ENCODE measurements at regions of chr6 and their contacts with region 1.

Region 1: GRCh38 chr6:72084992-72085569 is 198.7 kb downstream of the RIMS1 start:
- DNase-seq: no peak
- ATAC-seq: no peak
- H3K4me3 ChIP-seq: no peak overlapping the region
- H3K27ac ChIP-seq: no peak overlapping the region
- H3K4me1 ChIP-seq: no peaks in the 10 kb centered on the region
- H3K27me3 ChIP-seq: no peaks in the 10 kb centered on the region
- CTCF ChIP-seq: peak; percentile 48

Region 2: GRCh38 chr6:71533939-71534379 is 551.1 kb before region 1 on chr6:
- intact Hi-C with region 1: loop called (anchors 5 to 10 kb)
- DNase-seq: no peak
- ATAC-seq: no peak
- H3K4me3 ChIP-seq: no peak overlapping the region
- H3K27ac ChIP-seq: no peak overlapping the region
- H3K4me1 ChIP-seq: no peaks in the 10 kb centered on the region
- H3K27me3 ChIP-seq: no peaks in the 10 kb centered on the region
- CTCF ChIP-seq: peak; percentile 67

Region 3: DNA sequence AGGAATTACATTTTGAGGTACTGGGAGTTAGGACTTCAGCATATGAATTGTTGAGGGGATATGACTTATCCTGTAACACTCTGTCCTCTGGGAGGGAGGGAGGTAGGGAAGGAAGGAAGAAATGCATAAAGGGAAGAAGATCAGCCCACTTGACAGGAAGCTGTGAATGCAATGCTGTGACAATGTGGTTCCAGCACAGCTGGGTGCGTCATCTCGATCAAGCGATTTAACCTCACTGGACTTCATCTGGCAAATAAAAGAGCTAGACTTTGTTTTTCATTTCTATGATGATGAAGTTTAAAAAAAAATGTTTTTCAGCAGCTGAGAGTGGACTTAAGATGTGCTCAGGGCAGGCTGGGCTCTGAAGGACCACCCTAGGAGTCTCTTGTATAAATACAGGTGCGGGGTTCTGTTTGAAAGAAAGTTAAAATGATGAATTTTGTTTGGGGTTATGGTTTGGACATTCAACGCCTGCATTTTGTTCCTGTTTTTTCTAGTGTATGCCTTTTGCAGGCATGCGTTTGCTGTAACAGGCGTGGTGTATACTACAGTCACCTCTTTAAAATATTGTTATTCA is 20.6 kb before region 1 on chr6:
- intact Hi-C with region 1: no loop called
- DNase-seq: no peak
- ATAC-seq: no peak
- H3K4me3 ChIP-seq: no peak overlapping the region
- H3K27ac ChIP-seq: no peak overlapping the region
- H3K4me1 ChIP-seq: no peaks in the 10 kb centered on the region
- H3K27me3 ChIP-seq: no peaks in the 10 kb centered on the region
- CTCF ChIP-seq: no peak

Measured in psoas muscle (tissue), 8 donors.